Cardiac septum (tissue), 1 donor: ENCODE measurements at regions of chr12 and their contacts with region 1.

Region 1: GRCh38 chr12:95072900-95073697 is at the start of gene NR2C1:
- DNase-seq: peak; percentile 94
- total RNA-seq, gene NR2C1: 34.6 TPM

Region 2: GRCh38 chr12:95003213-95003920 is 69.7 kb before region 1 on chr12 and contains the start of gene NDUFA12:
- intact Hi-C with region 1: loop called (anchors 2 kb)
- DNase-seq: peak; percentile 97
- total RNA-seq, gene NDUFA12: 228 TPM

Region 3: GRCh38 chr12:95014554-95014953 is 58.5 kb before region 1 on chr12:
- intact Hi-C with region 1: no loop called
- DNase-seq: no peak

Region 4: DNA sequence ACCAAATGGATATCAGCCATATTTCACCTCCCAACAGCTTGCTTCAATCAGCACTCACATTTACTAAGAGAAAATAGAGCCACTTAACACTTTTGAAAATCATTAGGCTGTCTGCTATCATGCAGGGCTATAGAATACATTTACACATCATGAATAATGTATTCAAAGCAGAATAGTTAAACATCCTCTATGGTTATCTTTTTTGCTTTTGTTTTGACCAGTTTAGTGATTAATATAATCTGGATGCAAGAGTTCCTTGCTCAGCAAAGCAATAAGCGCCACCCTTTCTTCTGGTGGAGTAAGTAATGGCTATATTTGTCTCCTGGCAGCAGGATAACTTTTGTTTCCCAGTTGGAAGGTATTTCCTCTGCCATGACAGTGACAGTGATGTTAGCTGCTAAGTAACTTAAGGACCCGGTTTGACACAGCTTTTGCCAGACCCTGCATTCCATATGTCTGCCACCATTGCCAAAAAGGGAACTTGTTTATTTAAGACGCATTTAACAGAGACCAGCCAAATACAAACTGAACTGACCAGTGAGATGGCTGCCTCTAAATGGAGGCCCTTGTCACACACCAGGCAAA is 70.6 kb after region 1 on chr12:
- intact Hi-C with region 1: no loop called
- DNase-seq: no peak

Region 5: GRCh38 chr12:95633049-95633545 is 560.0 kb after region 1 on chr12:
- intact Hi-C with region 1: no loop called
- DNase-seq: no peak